Vagina (tissue), 2 donors: ENCODE measurements at regions of chr6 and their contacts with region 1.

Region 1: GRCh38 chr6:112037783-112038216 is 16.1 kb upstream of the CCN6 start:
- DNase-seq: peak in 1 of 2 donors; percentile 96
- H3K4me3 ChIP-seq: no peak overlapping the region
- H3K27ac ChIP-seq: peak overlapping the region; percentile 91
- H3K4me1 ChIP-seq: peaks cover 18% of the 10 kb centered on the region
- H3K27me3 ChIP-seq: no peaks in the 10 kb centered on the region
- CTCF ChIP-seq: no peak
- POLR2A ChIP-seq: no peak

Region 2: DNA sequence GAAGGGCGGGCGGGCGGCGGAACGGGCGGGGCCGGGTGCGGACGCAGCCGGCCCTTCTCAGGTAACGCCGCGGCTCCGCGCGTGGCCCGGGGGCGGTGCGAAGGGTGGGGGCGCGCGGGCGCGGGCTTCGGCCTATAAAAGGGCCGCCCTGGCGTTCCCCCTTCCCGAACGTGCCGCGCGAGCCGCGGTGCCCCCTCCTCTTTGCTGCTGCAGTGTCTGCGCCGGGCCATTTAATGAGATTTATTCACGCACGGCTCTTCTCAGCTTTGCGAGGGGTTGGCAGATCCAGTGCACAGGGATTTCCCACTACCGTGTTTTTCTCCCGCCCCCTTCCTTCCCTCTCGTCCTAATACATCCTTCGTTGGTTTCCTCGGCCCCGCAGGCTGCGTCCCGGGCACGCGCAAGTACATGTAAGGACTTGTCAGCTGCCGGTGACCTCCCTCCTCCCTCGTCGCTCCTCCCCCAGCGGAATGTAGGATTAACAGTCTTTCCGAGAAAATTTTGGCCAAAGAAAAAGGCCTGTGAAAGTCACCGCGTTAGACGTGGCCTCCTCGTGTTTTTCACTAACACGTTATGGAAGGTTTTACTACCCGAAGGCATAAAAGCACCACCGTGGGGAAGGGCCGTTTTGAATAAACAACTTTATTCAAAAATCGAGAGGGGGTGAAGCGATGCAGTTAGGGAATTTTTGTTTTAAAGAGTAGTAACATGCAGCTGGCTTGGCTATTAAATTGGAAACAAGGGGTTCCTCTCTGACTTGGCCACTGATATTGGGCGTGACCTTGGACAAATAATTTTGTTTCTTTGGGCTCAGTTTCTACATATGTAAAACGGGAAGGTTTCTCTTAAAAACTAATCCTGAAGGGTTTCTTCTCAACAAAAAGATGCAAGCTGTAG is 553.8 kb before region 1 on chr6:
- intact Hi-C with region 1: loop called (anchors 5 kb)
- DNase-seq: peak in 1 of 2 donors; percentile 99
- H3K4me3 ChIP-seq: peak overlapping the region; percentile 84 to 89
- H3K27ac ChIP-seq: peak overlapping the region; percentile 99
- H3K4me1 ChIP-seq: peaks cover 26% of the 10 kb centered on the region
- H3K27me3 ChIP-seq: no peaks in the 10 kb centered on the region
- CTCF ChIP-seq: peak in 1 of 3 experiments; percentile 17
- POLR2A ChIP-seq: peak in 1 of 2 donors; percentile 76

Region 3: GRCh38 chr6:111997078-111997852 is 40.5 kb before region 1 on chr6:
- intact Hi-C with region 1: loop called (anchors 5 kb)
- DNase-seq: no peak
- H3K4me3 ChIP-seq: peak overlapping the region in 1 of 2 donors; percentile 16
- H3K27ac ChIP-seq: no peak overlapping the region
- H3K4me1 ChIP-seq: no peaks in the 10 kb centered on the region
- H3K27me3 ChIP-seq: no peaks in the 10 kb centered on the region
- CTCF ChIP-seq: peak; percentile 74 to 93 (median 83)
- POLR2A ChIP-seq: no peak

Region 4: GRCh38 chr6:112113431-112113830 is 75.6 kb after region 1 on chr6:
- intact Hi-C with region 1: no loop called
- DNase-seq: no peak
- H3K4me3 ChIP-seq: no peak overlapping the region
- H3K27ac ChIP-seq: no peak overlapping the region
- H3K4me1 ChIP-seq: no peaks in the 10 kb centered on the region
- H3K27me3 ChIP-seq: no peaks in the 10 kb centered on the region
- CTCF ChIP-seq: no peak
- POLR2A ChIP-seq: no peak